ENCODE measurements at regions of chr9 and their contacts with region 1.

Region 1: GRCh38 chr9:28774416-28775235 is 1201.3 kb upstream of the C9orf72 start:
- DNase-seq: peak; percentile 54
- H3K4me3 Mint-ChIP-seq: no peak overlapping the region
- H3K27ac Mint-ChIP-seq: no peak overlapping the region
- H3K4me1 Mint-ChIP-seq: peaks cover 6% of the 10 kb centered on the region
- H3K27me3 Mint-ChIP-seq: no peaks in the 10 kb centered on the region
- CTCF ChIP-seq: peak; percentile 61

Region 2: GRCh38 chr9:28832168-28832760 is 57.6 kb after region 1 on chr9:
- CTCF ChIA-PET with region 1: no interaction called
- POLR2A ChIA-PET with region 1: no interaction called
- intact Hi-C with region 1: no loop called
- DNase-seq: no peak
- H3K4me3 Mint-ChIP-seq: no peak overlapping the region
- H3K27ac Mint-ChIP-seq: no peak overlapping the region
- H3K4me1 Mint-ChIP-seq: no peaks in the 10 kb centered on the region
- H3K27me3 Mint-ChIP-seq: no peaks in the 10 kb centered on the region
- CTCF ChIP-seq: no peak

Region 3: GRCh38 chr9:28930766-28931165 is 156.1 kb after region 1 on chr9:
- CTCF ChIA-PET with region 1: no interaction called
- POLR2A ChIA-PET with region 1: no interaction called
- intact Hi-C with region 1: no loop called
- DNase-seq: no peak
- H3K4me3 Mint-ChIP-seq: no peak overlapping the region
- H3K27ac Mint-ChIP-seq: peak overlapping the region; percentile 41
- H3K4me1 Mint-ChIP-seq: peaks cover 21% of the 10 kb centered on the region
- H3K27me3 Mint-ChIP-seq: no peaks in the 10 kb centered on the region
- CTCF ChIP-seq: no peak

Region 4: GRCh38 chr9:28976684-28977083 is 202.1 kb after region 1 on chr9:
- CTCF ChIA-PET with region 1: no interaction called
- POLR2A ChIA-PET with region 1: no interaction called
- intact Hi-C with region 1: loop called (anchors 5 kb)
- DNase-seq: no peak
- H3K4me3 Mint-ChIP-seq: no peak overlapping the region
- H3K27ac Mint-ChIP-seq: no peak overlapping the region
- H3K4me1 Mint-ChIP-seq: no peaks in the 10 kb centered on the region
- H3K27me3 Mint-ChIP-seq: no peaks in the 10 kb centered on the region
- CTCF ChIP-seq: no peak

Region 5: GRCh38 chr9:29691758-29692407 is 917.3 kb after region 1 on chr9:
- CTCF ChIA-PET with region 1: no interaction called
- POLR2A ChIA-PET with region 1: no interaction called
- intact Hi-C with region 1: loop called (anchors 1 kb)
- DNase-seq: peak; percentile 73
- H3K4me3 Mint-ChIP-seq: no peak overlapping the region
- H3K27ac Mint-ChIP-seq: no peak overlapping the region
- H3K4me1 Mint-ChIP-seq: no peaks in the 10 kb centered on the region
- H3K27me3 Mint-ChIP-seq: no peaks in the 10 kb centered on the region
- CTCF ChIP-seq: peak; percentile 42